ENCODE measurements at regions of chr20 and their contacts with region 1.

Region 1: GRCh38 chr20:15039103-15039752 is 701.8 kb upstream of the FLRT3 start:
- DNase-seq: peak; percentile 43 to 85
- H3K4me3 ChIP-seq: no peak overlapping the region
- H3K27ac ChIP-seq: peak overlapping the region; percentile 74
- H3K4me1 ChIP-seq: peaks cover 17% of the 10 kb centered on the region
- H3K27me3 ChIP-seq: no peaks in the 10 kb centered on the region
- CTCF ChIP-seq: no peak

Region 2: GRCh38 chr20:14644306-14645097 is 394.7 kb before region 1 on chr20:
- CTCF ChIA-PET with region 1: no interaction called
- POLR2A ChIA-PET with region 1: no interaction called
- intact Hi-C with region 1: no loop called
- DNase-seq: no peak
- H3K4me3 ChIP-seq: no peak overlapping the region
- H3K27ac ChIP-seq: no peak overlapping the region
- H3K4me1 ChIP-seq: no peaks in the 10 kb centered on the region
- H3K27me3 ChIP-seq: no peaks in the 10 kb centered on the region
- CTCF ChIP-seq: no peak

Region 3: DNA sequence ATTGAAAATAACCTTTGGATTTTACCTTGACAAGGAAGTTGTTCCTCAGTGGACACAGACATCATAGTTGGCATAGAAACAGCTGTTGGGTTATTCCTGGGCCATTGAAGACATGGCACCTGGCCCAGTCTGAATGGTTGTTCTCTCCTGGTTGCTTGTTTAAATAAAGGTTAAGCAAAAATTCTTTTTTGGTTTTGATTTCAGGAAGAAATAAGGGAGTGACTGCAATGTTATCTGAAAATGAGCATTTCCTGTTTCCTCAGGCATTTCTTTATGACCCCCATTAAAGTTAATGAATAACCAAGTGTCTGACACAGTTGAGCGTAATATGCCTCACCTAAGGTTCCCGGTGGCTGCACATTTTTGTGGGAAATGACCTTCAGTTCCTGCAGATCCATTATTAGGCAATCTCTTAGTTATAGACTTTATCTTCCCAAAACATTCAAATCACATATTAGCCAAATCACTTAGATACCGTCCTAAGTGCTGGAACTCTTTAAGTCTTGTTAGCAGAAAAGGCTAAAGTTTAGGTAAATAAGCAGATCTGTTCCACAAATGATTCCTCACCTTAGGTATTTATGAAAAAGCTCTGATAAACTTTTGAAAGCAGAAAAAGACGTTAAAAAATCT is 53.1 kb before region 1 on chr20:
- CTCF ChIA-PET with region 1: no interaction called
- POLR2A ChIA-PET with region 1: no interaction called
- intact Hi-C with region 1: loop called (anchors 2 kb)
- DNase-seq: peak; percentile 73 to 90
- H3K4me3 ChIP-seq: no peak overlapping the region
- H3K27ac ChIP-seq: peak overlapping the region; percentile 60
- H3K4me1 ChIP-seq: peaks cover 19% of the 10 kb centered on the region
- H3K27me3 ChIP-seq: no peaks in the 10 kb centered on the region
- CTCF ChIP-seq: no peak